A549 (cell line): ENCODE measurements at regions of chr16 and their contacts with region 1.

Region 1: GRCh38 chr16:56866943-56867830 is 2.2 kb downstream of the SLC12A3 start:
- DNase-seq: peak; percentile 60 to 66
- ATAC-seq: peak in 1 of 2 experiments; percentile 49; a peak in 3 of 6 replicates
- H3K4me3 ChIP-seq: no peak overlapping the region
- H3K27ac ChIP-seq: peak overlapping the region in 1 of 2 experiments; percentile 53; a peak in 3 of 6 replicates
- H3K4me1 ChIP-seq: no peaks in the 10 kb centered on the region
- CTCF ChIP-seq: peak; percentile 71
- EP300 ChIP-seq: no peak
- POLR2A ChIP-seq: no peak
- RAD21 ChIP-seq: peak; percentile 60 to 68

Region 2: GRCh38 chr16:56884026-56884582 is 16.9 kb after region 1 on chr16:
- CTCF ChIA-PET with region 1: interaction called, 10 read pairs
- POLR2A ChIA-PET with region 1: no interaction called
- DNase-seq: no peak
- ATAC-seq: no peak
- H3K4me3 ChIP-seq: no peak overlapping the region
- H3K27ac ChIP-seq: no peak overlapping the region
- H3K4me1 ChIP-seq: no peaks in the 10 kb centered on the region
- CTCF ChIP-seq: no peak
- EP300 ChIP-seq: no peak
- POLR2A ChIP-seq: no peak
- RAD21 ChIP-seq: no peak

Region 3: DNA sequence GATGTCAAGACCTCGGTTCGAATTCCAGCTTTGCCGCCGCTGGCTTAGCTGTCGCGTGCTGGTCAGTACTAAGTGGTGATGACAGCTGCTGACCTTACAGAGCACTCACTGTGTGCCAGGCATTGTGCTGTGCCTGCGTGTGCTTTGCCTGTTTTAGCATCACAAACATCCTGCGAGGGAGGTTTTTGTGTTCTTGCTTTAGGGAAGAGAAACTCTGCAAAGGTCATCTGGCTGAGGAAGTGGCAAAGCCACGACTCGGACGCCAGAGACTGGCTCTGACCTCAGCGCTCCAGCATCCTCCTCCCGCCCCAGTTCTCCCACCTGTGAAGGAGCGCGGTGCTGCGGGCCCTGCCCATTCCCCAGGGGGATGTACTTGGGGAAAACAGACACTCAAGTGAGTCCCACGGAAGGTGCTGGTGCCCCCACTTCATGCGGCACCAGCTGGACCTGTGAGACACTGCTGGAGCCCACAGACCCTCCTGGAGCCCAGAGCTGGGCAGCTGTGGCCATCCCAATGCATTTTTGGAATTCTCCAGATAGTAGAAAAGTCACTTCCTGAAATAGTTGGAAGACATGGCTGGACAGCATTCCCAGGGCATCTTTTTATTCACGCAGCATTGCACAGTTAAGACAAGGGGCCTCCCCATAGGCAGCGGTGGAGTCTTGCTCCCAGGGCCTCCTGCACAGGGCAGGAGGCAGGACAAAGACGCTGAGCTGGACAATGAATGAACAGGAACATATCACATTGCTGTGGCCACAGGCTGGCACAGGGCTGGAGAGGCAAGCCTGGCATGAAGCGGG is 44.8 kb after region 1 on chr16:
- CTCF ChIA-PET with region 1: interaction called, 11 read pairs
- POLR2A ChIA-PET with region 1: no interaction called
- DNase-seq: no peak
- ATAC-seq: peak in 1 of 2 experiments; percentile 43; a peak in 2 of 6 replicates
- H3K4me3 ChIP-seq: no peak overlapping the region
- H3K27ac ChIP-seq: no peak overlapping the region
- H3K4me1 ChIP-seq: no peaks in the 10 kb centered on the region
- CTCF ChIP-seq: no peak
- EP300 ChIP-seq: no peak
- POLR2A ChIP-seq: no peak
- RAD21 ChIP-seq: no peak

Region 4: GRCh38 chr16:56950881-56951771 is 83.9 kb after region 1 on chr16:
- CTCF ChIA-PET with region 1: interaction called, 48 read pairs
- POLR2A ChIA-PET with region 1: no interaction called
- DNase-seq: peak; percentile 60 to 65
- ATAC-seq: peak; percentile 76 to 93
- H3K4me3 ChIP-seq: no peak overlapping the region
- H3K27ac ChIP-seq: no peak overlapping the region
- H3K4me1 ChIP-seq: no peaks in the 10 kb centered on the region
- CTCF ChIP-seq: peak; percentile 58
- EP300 ChIP-seq: no peak
- POLR2A ChIP-seq: no peak
- RAD21 ChIP-seq: peak; percentile 64 to 73

Region 5: DNA sequence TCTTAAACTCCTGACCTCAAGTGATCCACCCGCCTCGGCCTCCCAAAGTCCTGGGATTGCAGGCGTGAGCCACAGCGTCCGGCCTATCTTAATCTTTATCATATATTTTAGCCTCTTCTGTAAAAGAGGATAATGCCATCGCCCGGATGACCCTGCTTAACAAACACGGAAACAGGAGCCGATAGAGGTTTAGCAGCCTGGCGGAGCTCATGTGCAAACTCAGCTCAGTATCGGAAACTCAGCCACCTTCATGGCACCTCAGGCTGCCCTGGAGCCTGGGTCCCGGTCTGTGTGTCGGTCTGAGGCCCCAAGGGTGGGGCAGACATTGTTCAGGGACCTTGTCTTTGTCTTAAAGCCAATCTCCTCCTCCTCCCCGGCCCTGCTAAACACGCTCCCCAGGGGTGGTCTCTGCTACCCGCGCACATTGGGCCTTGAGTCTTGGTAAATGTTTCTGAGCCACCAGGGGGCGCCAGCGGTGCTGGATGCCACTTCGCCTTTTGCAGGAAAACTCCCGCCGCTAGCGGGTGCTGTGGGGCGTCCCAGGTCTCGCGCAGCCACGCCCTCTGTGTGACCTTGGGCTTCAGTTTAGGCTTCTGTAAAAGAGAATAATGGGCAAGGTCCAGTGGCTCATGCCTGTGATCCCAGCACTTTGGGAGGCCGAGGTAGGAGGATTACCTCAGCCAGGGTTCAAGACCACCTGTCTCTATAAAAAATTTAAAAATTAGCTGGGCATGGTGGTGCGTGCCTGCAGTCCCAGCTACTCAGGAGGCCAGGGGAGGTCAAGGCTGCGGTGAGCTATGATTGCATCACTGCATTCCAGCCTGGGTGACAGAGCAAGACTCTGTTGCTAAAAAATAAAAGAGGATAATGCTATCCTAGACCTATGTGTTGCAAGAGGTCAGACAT is 97.3 kb after region 1 on chr16:
- CTCF ChIA-PET with region 1: interaction called, 15 read pairs
- POLR2A ChIA-PET with region 1: no interaction called
- DNase-seq: peak; percentile 73 to 85
- ATAC-seq: peak; percentile 57 to 87; a peak in 4 of 6 replicates
- H3K4me3 ChIP-seq: no peak overlapping the region
- H3K27ac ChIP-seq: peak overlapping the region in 1 of 2 experiments; percentile 22; a peak in 1 of 6 replicates
- H3K4me1 ChIP-seq: peaks cover 3% of the 10 kb centered on the region; the same call in 1 of the 3 replicates
- CTCF ChIP-seq: peak; percentile 89
- EP300 ChIP-seq: no peak
- POLR2A ChIP-seq: no peak
- RAD21 ChIP-seq: peak; percentile 70 to 82

Region 6: DNA sequence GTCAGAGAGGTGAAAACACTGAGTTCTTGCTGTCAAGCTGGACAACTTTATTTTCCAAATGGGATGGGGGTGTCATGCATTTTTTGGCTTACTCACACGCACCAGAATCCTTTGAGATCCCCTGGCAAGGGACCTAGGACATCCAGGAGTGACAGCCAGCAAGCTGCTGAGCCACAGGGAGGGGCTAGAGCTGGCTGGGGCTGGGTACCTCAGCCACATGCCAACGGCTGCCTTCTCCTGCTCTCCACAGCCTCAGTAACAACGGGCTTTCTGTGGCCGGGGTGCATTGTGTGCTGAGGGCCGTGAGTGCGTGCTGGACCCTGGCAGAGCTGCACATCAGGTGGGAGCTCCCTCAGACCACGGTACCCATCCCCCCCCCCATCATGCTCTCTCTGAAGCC is 169.8 kb after region 1 on chr16:
- CTCF ChIA-PET with region 1: no interaction called
- POLR2A ChIA-PET with region 1: no interaction called
- DNase-seq: no peak
- ATAC-seq: no peak
- H3K4me3 ChIP-seq: no peak overlapping the region
- H3K27ac ChIP-seq: no peak overlapping the region
- H3K4me1 ChIP-seq: no peaks in the 10 kb centered on the region
- CTCF ChIP-seq: no peak
- EP300 ChIP-seq: no peak
- POLR2A ChIP-seq: no peak
- RAD21 ChIP-seq: no peak